Caco-2 (cell line): ENCODE measurements at regions of chr5 and their contacts with region 1.

Region 1: GRCh38 chr5:180376511-180376910 is 23.4 kb upstream of the GFPT2 start:
- DNase-seq: no peak
- H3K4me3 ChIP-seq: no peak overlapping the region
- H3K4me3 Mint-ChIP-seq: no peak overlapping the region
- H3K27ac Mint-ChIP-seq: no peak overlapping the region
- H3K4me1 ChIP-seq: no peaks in the 10 kb centered on the region
- H3K4me1 Mint-ChIP-seq: no peaks in the 10 kb centered on the region
- H3K27me3 ChIP-seq: no peaks in the 10 kb centered on the region
- H3K27me3 Mint-ChIP-seq: peaks cover 10% of the 10 kb centered on the region
- CTCF ChIP-seq: no peak

Region 2: GRCh38 chr5:180253036-180253824 is 123.3 kb before region 1 on chr5:
- CTCF ChIA-PET with region 1: no interaction called
- POLR2A ChIA-PET with region 1: no interaction called
- intact Hi-C with region 1: no loop called
- DNase-seq: no peak
- H3K4me3 ChIP-seq: no peak overlapping the region
- H3K4me3 Mint-ChIP-seq: no peak overlapping the region
- H3K27ac Mint-ChIP-seq: no peak overlapping the region
- H3K4me1 ChIP-seq: no peaks in the 10 kb centered on the region
- H3K4me1 Mint-ChIP-seq: no peaks in the 10 kb centered on the region
- H3K27me3 ChIP-seq: no peaks in the 10 kb centered on the region
- H3K27me3 Mint-ChIP-seq: no peaks in the 10 kb centered on the region
- CTCF ChIP-seq: no peak

Region 3: GRCh38 chr5:180455873-180456272 is 79.4 kb after region 1 on chr5:
- CTCF ChIA-PET with region 1: no interaction called
- POLR2A ChIA-PET with region 1: interaction called, 11 read pairs
- intact Hi-C with region 1: no loop called
- DNase-seq: no peak
- H3K4me3 ChIP-seq: no peak overlapping the region
- H3K4me3 Mint-ChIP-seq: no peak overlapping the region
- H3K27ac Mint-ChIP-seq: no peak overlapping the region
- H3K4me1 ChIP-seq: no peaks in the 10 kb centered on the region
- H3K4me1 Mint-ChIP-seq: no peaks in the 10 kb centered on the region
- H3K27me3 ChIP-seq: no peaks in the 10 kb centered on the region
- H3K27me3 Mint-ChIP-seq: peaks cover 11% of the 10 kb centered on the region
- CTCF ChIP-seq: no peak

Region 4: DNA sequence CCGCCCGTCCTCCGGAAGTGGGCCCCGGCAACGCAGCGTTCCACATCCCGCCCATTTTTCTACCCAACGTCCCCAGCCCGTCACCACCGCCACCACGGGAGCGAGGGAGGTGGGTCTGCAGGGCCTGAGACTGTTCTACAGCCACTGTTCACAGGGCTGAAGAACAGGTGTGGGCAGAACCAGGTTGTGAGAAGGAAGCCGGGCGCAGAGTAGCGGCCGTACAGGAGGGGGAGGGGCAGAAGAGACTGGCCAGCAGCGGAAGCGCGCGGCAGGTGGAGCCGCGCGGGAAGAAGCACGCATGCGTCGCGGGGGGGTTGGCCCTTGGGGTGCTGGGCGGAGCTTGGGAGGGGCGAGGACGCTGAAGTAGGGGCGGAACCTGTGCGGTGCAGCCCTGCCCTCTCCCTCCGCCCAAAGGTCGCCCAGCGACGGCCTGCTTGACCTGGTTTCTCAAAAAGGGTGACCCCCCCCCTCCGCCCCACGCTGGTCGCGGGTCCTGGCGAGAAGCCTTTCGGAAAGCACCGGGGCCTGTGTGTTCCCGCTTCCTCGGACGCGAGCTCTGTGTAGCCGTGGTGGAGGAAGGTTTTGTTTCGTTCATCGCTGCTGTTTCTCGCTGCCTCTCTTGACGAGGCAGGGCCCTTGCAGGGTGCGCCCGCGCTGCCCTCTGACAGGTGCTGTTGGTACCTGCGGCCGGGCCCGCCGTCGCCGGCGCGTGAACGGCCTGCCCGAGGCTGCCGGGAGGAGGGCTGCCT is 433.9 kb after region 1 on chr5:
- CTCF ChIA-PET with region 1: no interaction called
- POLR2A ChIA-PET with region 1: no interaction called
- intact Hi-C with region 1: no loop called
- DNase-seq: peak; percentile 96 to 97
- H3K4me3 ChIP-seq: peak overlapping the region; percentile 64
- H3K4me3 Mint-ChIP-seq: peak overlapping the region; percentile 84
- H3K27ac Mint-ChIP-seq: peak overlapping the region; percentile 66
- H3K4me1 ChIP-seq: peaks cover 42% of the 10 kb centered on the region
- H3K4me1 Mint-ChIP-seq: peaks cover 62% of the 10 kb centered on the region
- H3K27me3 ChIP-seq: no peaks in the 10 kb centered on the region
- H3K27me3 Mint-ChIP-seq: no peaks in the 10 kb centered on the region
- CTCF ChIP-seq: no peak